ENCODE measurements at regions of chr2 and their contacts with region 1.

Region 1: GRCh38 chr2:168346725-168347477 is 99.5 kb upstream of the STK39 start:
- DNase-seq: peak; percentile 31
- H3K4me3 ChIP-seq: no peak overlapping the region
- H3K27ac ChIP-seq: no peak overlapping the region
- H3K4me1 ChIP-seq: peaks cover 9% of the 10 kb centered on the region
- CTCF ChIP-seq: peak; percentile 88

Region 2: DNA sequence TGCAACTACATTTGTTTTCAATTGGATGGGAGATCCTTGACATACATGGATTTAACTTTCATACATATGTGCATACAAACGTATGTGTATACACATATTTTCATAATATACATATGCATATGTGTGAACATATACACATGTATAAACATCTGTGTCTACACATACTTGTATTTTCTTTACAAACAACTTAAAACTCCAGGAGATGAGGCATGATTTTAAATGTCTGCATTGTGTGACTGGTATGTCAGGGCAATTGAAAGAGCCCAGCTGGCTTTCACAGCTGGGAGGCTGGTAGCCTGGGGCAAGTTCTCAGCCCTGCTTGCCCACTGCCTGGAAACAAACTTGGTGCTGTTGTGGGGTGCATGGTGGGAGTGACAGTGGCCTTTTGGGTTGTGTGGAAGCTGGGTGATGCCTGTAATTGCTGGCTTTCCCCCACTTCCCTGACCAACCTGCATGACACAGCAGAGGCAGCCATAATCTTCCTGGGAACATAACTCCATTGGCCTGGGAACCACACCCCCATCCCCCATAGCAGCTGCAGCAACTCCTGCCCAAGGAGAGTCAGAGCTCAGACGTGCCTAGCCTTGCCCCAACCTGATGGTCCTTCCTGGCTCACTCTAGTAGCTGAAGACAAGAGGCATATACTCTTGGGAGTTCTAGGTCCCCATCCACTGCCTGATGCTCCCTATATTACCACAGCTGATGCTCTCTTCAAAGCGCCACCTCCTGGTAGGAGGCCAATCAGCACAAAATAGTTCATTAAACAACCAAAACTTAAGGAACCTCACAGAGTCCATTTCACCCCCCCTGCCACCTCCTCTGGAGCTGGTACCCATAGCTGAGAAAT is 267.5 kb after region 1 on chr2:
- CTCF ChIA-PET with region 1: no interaction called
- POLR2A ChIA-PET with region 1: no interaction called
- intact Hi-C with region 1: loop called (anchors 10 kb)
- DNase-seq: peak; percentile 7
- H3K4me3 ChIP-seq: no peak overlapping the region
- H3K27ac ChIP-seq: no peak overlapping the region
- H3K4me1 ChIP-seq: no peaks in the 10 kb centered on the region
- CTCF ChIP-seq: peak; percentile 68

Region 3: GRCh38 chr2:168687314-168687713 is 340.4 kb after region 1 on chr2:
- CTCF ChIA-PET with region 1: no interaction called
- POLR2A ChIA-PET with region 1: no interaction called
- intact Hi-C with region 1: loop called (anchors 10 kb)
- DNase-seq: peak; percentile 4
- H3K4me3 ChIP-seq: no peak overlapping the region
- H3K27ac ChIP-seq: no peak overlapping the region
- H3K4me1 ChIP-seq: no peaks in the 10 kb centered on the region
- CTCF ChIP-seq: peak; percentile 50; the same call in 1 of the 2 replicates

Region 4: DNA sequence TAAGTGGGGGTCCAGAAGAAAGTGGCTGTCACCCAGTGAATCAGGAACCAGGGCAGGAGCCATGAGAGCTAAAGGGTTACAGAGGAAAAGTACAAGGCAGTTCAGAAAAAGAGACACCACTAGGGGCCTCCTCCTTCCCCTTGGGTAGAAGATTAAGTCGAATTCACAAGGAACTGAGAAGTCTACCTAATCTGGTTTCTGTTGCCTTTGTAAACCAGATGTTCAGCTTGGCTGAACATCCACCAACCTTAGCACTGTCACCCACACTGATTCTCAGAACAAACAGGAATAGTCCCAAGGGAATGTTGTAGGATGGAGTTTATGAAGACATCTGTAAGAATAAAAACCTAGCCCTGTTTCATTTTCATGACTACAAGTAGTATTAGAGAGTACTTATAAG is 365.1 kb after region 1 on chr2:
- CTCF ChIA-PET with region 1: no interaction called
- POLR2A ChIA-PET with region 1: no interaction called
- intact Hi-C with region 1: no loop called
- DNase-seq: peak; percentile 51
- H3K4me3 ChIP-seq: no peak overlapping the region
- H3K27ac ChIP-seq: no peak overlapping the region
- H3K4me1 ChIP-seq: peaks cover 10% of the 10 kb centered on the region
- CTCF ChIP-seq: peak; percentile 48

Region 5: GRCh38 chr2:168758970-168759820 is 412.3 kb after region 1 on chr2:
- CTCF ChIA-PET with region 1: no interaction called
- POLR2A ChIA-PET with region 1: interaction called, 5 read pairs
- intact Hi-C with region 1: loop called (anchors 2 kb)
- DNase-seq: peak; percentile 60
- H3K4me3 ChIP-seq: no peak overlapping the region
- H3K27ac ChIP-seq: no peak overlapping the region
- H3K4me1 ChIP-seq: no peaks in the 10 kb centered on the region
- CTCF ChIP-seq: peak; percentile 80

Region 6: DNA sequence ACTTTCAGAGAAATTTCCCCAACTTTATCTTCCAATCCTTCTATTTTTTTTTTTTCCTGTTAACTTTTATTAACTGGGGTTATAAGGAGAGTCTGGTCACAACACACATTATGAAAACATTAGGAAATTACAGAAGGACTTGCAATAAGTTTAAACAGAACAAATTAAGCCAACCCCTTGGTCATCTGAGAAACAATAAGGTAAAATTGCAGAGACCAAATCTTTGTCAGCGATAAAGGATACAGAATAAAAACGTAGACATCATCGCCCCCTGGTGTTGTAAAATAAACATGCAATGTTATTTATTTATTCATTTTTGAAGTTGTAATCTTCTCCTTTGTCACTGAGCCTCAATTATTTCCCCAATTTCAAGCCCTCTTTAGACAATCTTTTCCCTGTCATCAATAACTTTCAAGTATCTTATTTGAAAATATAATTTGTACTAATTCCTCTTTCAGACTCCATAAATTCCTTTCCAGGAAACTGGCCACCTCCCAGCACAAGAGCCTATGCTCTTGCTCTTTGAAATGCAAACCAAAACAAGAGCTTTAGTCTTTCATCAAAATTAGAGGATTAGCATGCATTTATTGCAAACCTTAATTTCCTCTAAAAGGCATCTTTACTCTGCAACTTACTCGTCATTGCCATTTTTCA is 573.7 kb after region 1 on chr2:
- CTCF ChIA-PET with region 1: no interaction called
- POLR2A ChIA-PET with region 1: no interaction called
- intact Hi-C with region 1: loop called (anchors 5 kb)
- DNase-seq: peak; percentile 49
- H3K4me3 ChIP-seq: no peak overlapping the region
- H3K27ac ChIP-seq: no peak overlapping the region
- H3K4me1 ChIP-seq: no peaks in the 10 kb centered on the region
- CTCF ChIP-seq: peak; percentile 88

Measured in OCI-LY7 (cell line).